Activated CD4-positive, alpha-beta T cell treated with anti-CD3 and anti-CD28 coated beads for 36 hours (primary cell): ENCODE measurements at regions of chr3 and their contacts with region 1.

Region 1: GRCh38 chr3:57411715-57412114 is 119.2 kb upstream of the ASB14 start:
- DNase-seq: no peak
- ATAC-seq: no peak
- H3K4me3 Mint-ChIP-seq: no peak overlapping the region
- H3K27ac Mint-ChIP-seq: no peak overlapping the region
- H3K4me1 Mint-ChIP-seq: peaks cover 3% of the 10 kb centered on the region
- H3K27me3 Mint-ChIP-seq: peaks cover 2% of the 10 kb centered on the region

Region 2: GRCh38 chr3:57041604-57042086 is 370.1 kb before region 1 on chr3:
- CTCF ChIA-PET with region 1: no interaction called
- POLR2A ChIA-PET with region 1: no interaction called
- intact Hi-C with region 1: no loop called
- DNase-seq: no peak
- ATAC-seq: no peak
- H3K4me3 Mint-ChIP-seq: no peak overlapping the region
- H3K27ac Mint-ChIP-seq: no peak overlapping the region
- H3K4me1 Mint-ChIP-seq: no peaks in the 10 kb centered on the region
- H3K27me3 Mint-ChIP-seq: peaks cover 5% of the 10 kb centered on the region

Region 3: DNA sequence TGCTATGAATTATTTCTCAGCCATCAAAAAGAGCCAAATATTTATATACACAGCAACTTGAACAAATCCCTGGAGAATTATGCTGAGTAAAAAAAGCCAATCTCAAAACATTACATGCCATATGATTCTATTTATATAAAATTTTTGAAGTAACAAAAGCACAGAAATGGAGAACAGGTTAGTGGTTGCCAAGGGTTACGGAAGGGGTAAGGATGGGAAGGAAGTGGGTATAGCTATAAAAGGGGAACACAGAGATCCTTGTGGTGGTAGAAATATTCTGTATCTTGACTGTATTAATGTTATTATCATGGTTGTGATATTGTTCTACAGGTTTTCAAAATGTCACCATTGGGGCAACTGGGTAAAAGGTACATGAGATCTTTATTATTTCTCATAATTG is 56.9 kb before region 1 on chr3:
- CTCF ChIA-PET with region 1: no interaction called
- POLR2A ChIA-PET with region 1: no interaction called
- intact Hi-C with region 1: loop called in 1 of 2 experiments (anchors 10 kb)
- DNase-seq: no peak
- ATAC-seq: no peak
- H3K4me3 Mint-ChIP-seq: no peak overlapping the region
- H3K27ac Mint-ChIP-seq: no peak overlapping the region
- H3K4me1 Mint-ChIP-seq: no peaks in the 10 kb centered on the region
- H3K27me3 Mint-ChIP-seq: no peaks in the 10 kb centered on the region